Mammary epithelial cell (primary cell): ENCODE measurements at regions of chr20 and their contacts with region 1.

Region 1: DNA sequence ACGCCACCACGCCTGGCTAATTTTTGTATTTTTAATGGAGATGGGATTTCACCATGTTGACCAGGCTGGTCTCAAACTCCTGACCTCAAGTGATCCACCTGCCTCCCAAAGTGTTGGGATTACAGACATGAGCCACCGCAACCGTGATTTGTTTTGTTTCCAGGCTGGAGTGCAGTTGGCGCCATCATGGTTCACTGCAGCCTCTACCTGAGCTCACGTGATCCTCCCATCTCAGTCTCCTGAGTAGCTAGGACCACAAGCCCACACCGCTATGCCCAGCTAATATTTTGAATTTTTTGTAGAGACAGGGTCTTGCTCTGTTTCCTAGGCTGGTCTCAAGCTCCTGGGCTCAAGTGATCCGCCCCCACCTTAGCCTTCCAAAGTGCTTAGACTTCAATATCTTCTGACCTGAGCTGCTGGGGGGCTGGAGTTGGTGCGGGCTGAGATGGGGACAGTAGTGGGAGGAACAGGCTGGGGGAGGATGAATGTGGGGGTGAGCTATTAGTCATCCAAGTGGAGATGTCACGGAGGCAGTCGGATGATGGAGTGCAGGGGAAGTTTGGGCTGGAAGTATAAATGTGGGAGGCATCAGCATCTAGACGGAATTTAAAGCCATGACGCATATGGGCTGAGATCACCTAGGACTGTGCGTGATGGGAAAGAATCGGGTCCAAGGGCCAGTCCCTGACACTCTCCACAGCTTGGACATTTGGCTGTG is 23.1 kb upstream of the ZMYND8 start:
- DNase-seq: no peak
- H3K4me3 ChIP-seq: no peak overlapping the region
- H3K27ac ChIP-seq: no peak overlapping the region
- H3K4me1 ChIP-seq: peaks cover 16% of the 10 kb centered on the region
- H3K27me3 ChIP-seq: no peaks in the 10 kb centered on the region
- CTCF ChIP-seq: no peak

Region 2: DNA sequence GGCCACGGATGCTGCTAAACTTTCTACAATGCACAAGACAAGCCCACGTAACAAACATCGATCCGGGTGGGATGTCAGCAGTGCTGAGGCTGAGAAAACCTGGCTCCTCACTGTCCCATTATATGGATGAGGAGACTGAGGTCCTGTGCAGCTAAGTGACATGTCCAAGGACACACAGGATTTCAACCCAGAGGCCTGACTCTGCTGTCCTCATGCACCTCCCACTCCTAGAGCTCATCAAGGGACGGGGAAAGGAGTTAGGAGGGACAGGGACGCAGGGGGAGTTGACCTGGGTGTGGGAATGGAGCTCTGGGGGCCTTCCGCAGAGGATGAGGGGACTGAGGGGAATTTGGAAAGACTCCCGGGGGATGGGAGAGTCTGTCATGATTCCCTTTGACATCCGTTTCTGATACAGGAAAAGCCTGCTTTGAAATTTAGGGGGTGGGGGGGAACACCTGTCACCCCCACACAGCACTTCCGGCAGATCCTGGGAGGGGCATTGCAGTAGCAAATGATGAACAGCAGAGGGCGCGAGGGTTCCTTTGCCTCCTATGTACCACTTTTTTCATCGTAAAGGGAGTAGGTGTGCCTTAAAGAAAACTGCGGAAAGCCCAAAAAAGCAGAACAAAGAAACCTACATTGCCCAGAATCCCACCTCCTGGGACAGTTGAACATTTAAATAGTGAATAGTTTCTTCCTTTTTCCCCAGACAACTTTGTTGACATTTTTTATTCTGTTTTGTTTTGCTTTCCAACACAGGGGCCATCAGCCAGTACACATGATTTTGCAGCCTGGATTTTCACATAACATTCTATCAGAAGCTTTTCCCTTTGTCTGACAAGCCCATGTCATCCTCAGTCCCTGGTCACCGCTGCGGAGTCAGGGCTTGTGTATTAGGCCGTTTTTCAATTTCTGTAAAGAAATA is 621.6 kb before region 1 on chr20:
- CTCF ChIA-PET with region 1: interaction called, 4 read pairs
- dilution Hi-C with region 1: no loop called
- in situ Hi-C with region 1: loop called (anchors 10 kb)
- intact Hi-C with region 1: loop called (anchors 1 kb)
- DNase-seq: peak; percentile 38
- H3K4me3 ChIP-seq: no peak overlapping the region
- H3K27ac ChIP-seq: no peak overlapping the region
- H3K4me1 ChIP-seq: no peaks in the 10 kb centered on the region
- H3K27me3 ChIP-seq: no peaks in the 10 kb centered on the region
- CTCF ChIP-seq: peak; percentile 92 to 97

Region 3: DNA sequence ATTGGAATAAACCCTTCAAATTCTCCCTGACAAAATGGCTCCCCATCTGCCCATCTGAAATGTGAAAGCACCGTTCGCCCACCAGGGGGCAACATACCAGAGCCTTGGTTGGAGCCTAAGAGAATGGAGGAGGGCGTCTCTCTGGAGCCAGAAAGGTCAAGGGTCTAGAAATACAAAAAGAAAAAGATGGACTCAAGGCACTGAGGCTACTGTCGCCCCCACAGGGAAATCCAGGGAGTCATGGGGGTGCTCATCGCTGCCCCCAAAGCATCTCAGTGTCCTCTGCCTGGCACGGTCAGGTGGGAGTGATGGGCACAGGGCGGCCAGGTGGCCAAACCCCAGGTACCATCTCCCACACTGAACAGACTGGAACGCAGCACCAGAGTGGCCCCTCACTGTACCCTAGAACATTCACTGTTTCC is 159.4 kb before region 1 on chr20:
- CTCF ChIA-PET with region 1: no interaction called
- dilution Hi-C with region 1: no loop called
- in situ Hi-C with region 1: no loop called
- intact Hi-C with region 1: loop called (anchors 1 kb)
- DNase-seq: no peak
- H3K4me3 ChIP-seq: no peak overlapping the region
- H3K27ac ChIP-seq: no peak overlapping the region
- H3K4me1 ChIP-seq: no peaks in the 10 kb centered on the region
- H3K27me3 ChIP-seq: no peaks in the 10 kb centered on the region
- CTCF ChIP-seq: peak; percentile 64 to 68

Region 4: DNA sequence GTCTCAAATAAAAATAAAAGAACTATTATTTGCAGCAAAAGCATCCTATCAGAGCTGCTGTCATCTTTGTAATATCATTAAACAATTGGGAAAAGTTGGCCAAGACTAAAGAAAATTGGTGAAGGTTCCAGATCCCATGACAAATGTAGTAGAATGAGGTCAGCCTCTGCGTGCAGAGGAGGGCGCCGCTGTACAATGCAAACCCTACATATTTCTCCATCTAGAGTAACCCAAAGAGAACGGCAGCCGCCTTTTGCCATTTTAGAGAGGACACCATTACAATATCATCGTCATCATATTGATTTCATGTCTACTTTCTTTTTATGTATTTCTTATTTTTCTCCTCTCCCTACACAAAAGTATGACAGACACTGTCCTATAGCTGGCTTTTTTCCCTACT is 82.6 kb before region 1 on chr20:
- CTCF ChIA-PET with region 1: no interaction called
- dilution Hi-C with region 1: no loop called
- in situ Hi-C with region 1: no loop called
- intact Hi-C with region 1: loop called (anchors 1 kb)
- DNase-seq: no peak
- H3K4me3 ChIP-seq: no peak overlapping the region
- H3K27ac ChIP-seq: no peak overlapping the region
- H3K4me1 ChIP-seq: no peaks in the 10 kb centered on the region
- H3K27me3 ChIP-seq: no peaks in the 10 kb centered on the region
- CTCF ChIP-seq: peak in 1 of 2 donors; percentile 20

Region 5: DNA sequence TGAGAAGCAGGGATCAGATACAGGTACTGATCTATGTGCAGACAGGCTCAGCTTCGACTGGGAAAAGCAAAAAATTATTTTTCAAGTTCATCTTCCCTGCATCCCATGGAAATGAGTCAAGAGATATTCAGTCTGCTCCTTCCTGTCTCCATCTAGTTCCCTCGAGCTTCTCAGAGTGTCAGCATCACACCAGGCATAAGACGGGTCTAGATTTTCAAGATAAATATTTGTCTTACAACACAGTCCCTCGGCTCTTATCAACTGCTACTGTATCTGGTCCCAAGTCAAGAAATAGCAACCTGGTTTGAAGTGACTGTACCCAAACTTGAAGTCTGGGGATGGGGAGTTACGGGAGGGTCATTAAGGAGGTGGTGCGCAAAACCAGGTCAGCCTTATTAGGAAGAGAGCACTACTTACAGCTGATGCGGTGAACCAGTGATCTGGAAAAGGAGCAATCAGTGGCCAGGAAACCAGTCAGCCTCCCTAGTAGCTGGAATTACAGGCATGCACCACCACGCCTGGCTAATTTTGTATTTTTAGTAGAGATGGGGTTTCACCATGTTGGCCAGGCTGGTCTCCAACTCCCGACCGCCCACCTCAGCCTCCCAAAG is 52.8 kb before region 1 on chr20:
- CTCF ChIA-PET with region 1: interaction called, 9 read pairs
- dilution Hi-C with region 1: loop called (anchors 5 kb)
- in situ Hi-C with region 1: no loop called
- intact Hi-C with region 1: no loop called
- DNase-seq: no peak
- H3K4me3 ChIP-seq: no peak overlapping the region
- H3K27ac ChIP-seq: no peak overlapping the region
- H3K4me1 ChIP-seq: peaks cover 25% of the 10 kb centered on the region
- H3K27me3 ChIP-seq: no peaks in the 10 kb centered on the region
- CTCF ChIP-seq: no peak

Region 6: DNA sequence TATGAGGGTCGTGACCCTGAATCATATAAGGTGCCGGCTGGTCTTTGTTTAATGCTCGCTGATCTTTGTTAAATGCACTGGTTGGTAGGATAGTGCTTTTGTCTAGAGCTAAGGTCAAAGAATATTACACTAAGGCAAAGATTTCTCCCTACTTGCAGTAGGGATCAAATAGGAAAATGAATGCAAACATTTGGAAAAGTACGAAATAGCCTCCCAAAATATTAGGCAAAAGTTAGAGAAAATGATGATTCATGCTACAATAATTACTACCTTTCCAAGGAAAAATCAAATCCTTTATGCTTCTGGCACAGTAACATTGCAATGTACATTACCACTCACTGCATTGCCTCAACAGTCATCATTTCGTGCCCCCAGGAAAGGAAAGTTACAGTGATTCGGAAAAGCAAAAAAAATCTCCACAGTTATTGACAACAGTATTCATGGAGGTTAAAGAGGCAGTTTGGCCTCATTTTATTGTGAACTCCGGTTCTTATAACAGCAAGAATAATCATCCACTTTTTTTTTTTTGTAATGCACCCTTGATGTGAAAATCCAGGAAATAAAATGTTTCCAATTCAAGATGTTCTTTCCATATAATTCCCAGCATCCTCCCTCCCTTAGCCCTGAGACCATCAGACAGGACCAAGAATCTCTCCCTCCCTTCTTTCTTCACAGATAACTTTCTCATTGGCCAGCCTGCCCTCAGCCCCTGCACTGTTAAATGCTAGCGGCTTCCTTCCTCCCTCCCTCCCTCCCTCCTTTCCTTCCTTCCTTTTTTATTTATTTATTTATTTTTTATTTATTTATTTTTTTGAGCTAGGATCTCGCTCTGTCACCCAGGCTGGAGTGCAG is 38.7 kb after region 1 on chr20:
- CTCF ChIA-PET with region 1: no interaction called
- dilution Hi-C with region 1: no loop called
- in situ Hi-C with region 1: no loop called
- intact Hi-C with region 1: no loop called
- DNase-seq: no peak
- H3K4me3 ChIP-seq: no peak overlapping the region
- H3K27ac ChIP-seq: no peak overlapping the region
- H3K4me1 ChIP-seq: no peaks in the 10 kb centered on the region
- H3K27me3 ChIP-seq: no peaks in the 10 kb centered on the region
- CTCF ChIP-seq: no peak

Region 7: GRCh38 chr20:47620808-47621805 is 241.5 kb after region 1 on chr20:
- CTCF ChIA-PET with region 1: interaction called, 6 read pairs
- dilution Hi-C with region 1: no loop called
- in situ Hi-C with region 1: loop called (anchors 10 to 25 kb)
- intact Hi-C with region 1: loop called (anchors 1 kb)
- DNase-seq: peak; percentile 36
- H3K4me3 ChIP-seq: no peak overlapping the region
- H3K27ac ChIP-seq: no peak overlapping the region
- H3K4me1 ChIP-seq: no peaks in the 10 kb centered on the region
- H3K27me3 ChIP-seq: no peaks in the 10 kb centered on the region
- CTCF ChIP-seq: peak; percentile 78 to 85